Esophagus muscularis mucosa (tissue), 4 donors: ENCODE measurements at regions of chr6 and their contacts with region 1.

Region 1: GRCh38 chr6:139250296-139251044 is 41.3 kb downstream of the TXLNB start:
- DNase-seq: no peak
- H3K4me3 ChIP-seq: no peak overlapping the region
- H3K27ac ChIP-seq: peak overlapping the region in 3 of 4 donors; percentile 14 to 53 (median 40)
- H3K4me1 ChIP-seq: peaks cover 18 to 23% (median 19%) of the 10 kb centered on the region in 4 donors
- H3K27me3 ChIP-seq: no peaks in the 10 kb centered on the region
- CTCF ChIP-seq: peak; percentile 45 to 73 (median 49)
- EP300 ChIP-seq: no peak
- POLR2A ChIP-seq: no peak

Region 2: GRCh38 chr6:139288496-139289040 is 38.1 kb after region 1 on chr6:
- intact Hi-C with region 1: loop called (anchors 5 kb)
- DNase-seq: no peak
- H3K4me3 ChIP-seq: no peak overlapping the region
- H3K27ac ChIP-seq: no peak overlapping the region
- H3K4me1 ChIP-seq: peaks cover 29 to 45% (median 32%) of the 10 kb centered on the region in 4 donors
- H3K27me3 ChIP-seq: no peaks in the 10 kb centered on the region
- CTCF ChIP-seq: no peak
- EP300 ChIP-seq: no peak
- POLR2A ChIP-seq: no peak

Region 3: DNA sequence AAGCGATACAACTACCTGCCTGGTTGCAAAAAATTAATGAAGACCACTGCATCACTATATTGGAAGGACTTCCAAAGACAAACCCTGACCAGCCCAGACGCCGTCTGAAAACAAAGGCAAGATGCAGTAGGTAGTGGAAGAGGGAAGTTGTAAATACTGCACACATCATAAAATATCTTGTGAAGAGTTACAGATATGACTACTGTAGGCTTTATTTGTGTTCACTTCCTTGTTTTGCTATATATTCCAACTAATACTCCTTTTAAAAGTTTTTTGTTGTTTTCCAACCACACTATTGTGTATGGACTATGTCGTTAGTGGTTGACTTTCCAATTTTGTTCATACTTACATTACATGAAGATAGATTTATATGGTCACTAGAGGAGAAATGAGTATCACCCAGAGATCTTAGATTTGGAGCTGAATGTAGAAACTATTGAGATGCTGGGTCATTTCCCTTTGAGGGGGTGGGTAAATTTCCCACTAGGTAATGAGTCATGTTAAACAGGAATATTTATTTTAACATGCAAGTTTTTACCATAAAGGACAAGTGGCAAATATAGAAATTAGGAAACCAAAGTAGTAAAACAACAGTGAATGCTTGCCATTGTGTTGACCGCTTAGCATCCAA is 57.9 kb after region 1 on chr6:
- intact Hi-C with region 1: no loop called
- DNase-seq: no peak
- H3K4me3 ChIP-seq: no peak overlapping the region
- H3K27ac ChIP-seq: no peak overlapping the region
- H3K4me1 ChIP-seq: peaks cover 0 to 11% (median 0%) of the 10 kb centered on the region in 4 donors
- H3K27me3 ChIP-seq: no peaks in the 10 kb centered on the region
- CTCF ChIP-seq: no peak
- EP300 ChIP-seq: no peak
- POLR2A ChIP-seq: no peak